ENCODE measurements at regions of chr14 and their contacts with region 1.

Region 1: GRCh38 chr14:52552063-52552988 is at the starts of genes GPR137C and TXNDC16:
- DNase-seq: peak; percentile 98 to 100 (median 99)
- ATAC-seq: peak; percentile 85
- H3K4me3 ChIP-seq: peak within 1 kb of the TSS; percentile 95
- H3K4me3 Mint-ChIP-seq: peak within 1 kb of the TSS; percentile 98
- H3K27ac ChIP-seq: peak within 1 kb of the TSS; percentile 80 to 88
- H3K27ac Mint-ChIP-seq: peak within 1 kb of the TSS; percentile 91
- H3K4me1 ChIP-seq: peaks cover 32% of the 10 kb centered on the region
- H3K4me1 Mint-ChIP-seq: peaks cover 39% of the 10 kb centered on the region
- H3K27me3 ChIP-seq: no peaks in the 10 kb centered on the region
- H3K27me3 Mint-ChIP-seq: peaks cover 15% of the 10 kb centered on the region
- CTCF ChIP-seq: no peak
- total RNA-seq, gene GPR137C: 0.08 to 0.19 TPM
- total RNA-seq, gene TXNDC16: 10.4 to 11.4 TPM

Region 2: DNA sequence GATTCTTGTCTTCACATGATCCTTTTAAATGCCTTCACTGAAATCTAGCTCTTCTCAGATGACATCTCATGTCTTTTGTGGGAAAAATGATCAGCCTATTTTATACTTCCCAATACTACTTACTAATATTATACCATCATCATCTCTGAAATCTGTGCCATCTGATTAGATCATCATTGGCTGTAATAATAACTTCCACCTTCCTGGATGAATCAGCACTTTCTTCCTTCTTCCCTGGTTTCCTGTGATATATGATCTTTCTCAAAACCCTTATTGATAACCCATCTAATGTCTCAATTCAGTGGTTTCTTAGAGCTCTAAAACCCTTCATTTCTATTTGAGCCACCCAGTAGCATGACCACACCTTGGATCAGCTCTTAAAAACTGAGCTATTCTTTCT is 31.2 kb after region 1 on chr14:
- CTCF ChIA-PET with region 1: no interaction called
- POLR2A ChIA-PET with region 1: no interaction called
- intact Hi-C with region 1: no loop called
- DNase-seq: no peak
- ATAC-seq: no peak
- H3K4me3 ChIP-seq: no peak overlapping the region
- H3K4me3 Mint-ChIP-seq: no peak overlapping the region
- H3K27ac ChIP-seq: no peak overlapping the region
- H3K27ac Mint-ChIP-seq: no peak overlapping the region
- H3K4me1 ChIP-seq: no peaks in the 10 kb centered on the region
- H3K4me1 Mint-ChIP-seq: no peaks in the 10 kb centered on the region
- H3K27me3 ChIP-seq: no peaks in the 10 kb centered on the region
- H3K27me3 Mint-ChIP-seq: no peaks in the 10 kb centered on the region
- CTCF ChIP-seq: no peak

Region 3: DNA sequence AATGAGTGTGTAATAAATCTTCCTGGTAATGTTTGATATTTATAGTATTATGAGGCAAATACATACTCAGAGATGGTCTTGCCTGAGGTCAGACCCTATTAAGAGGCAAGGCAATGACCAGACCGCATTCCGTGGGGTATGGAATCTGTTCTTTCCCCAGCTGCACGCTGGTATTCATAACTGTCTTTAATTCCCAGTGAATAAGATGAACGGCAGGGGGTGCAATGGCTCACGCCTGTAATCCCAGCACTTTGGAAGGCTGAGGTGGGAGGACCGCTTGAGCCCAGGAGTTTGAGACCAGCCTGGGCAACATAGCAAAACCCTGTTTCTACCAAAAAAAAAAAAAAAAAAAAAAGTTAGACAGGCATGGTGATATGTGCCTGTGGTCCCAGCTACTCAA is 98.4 kb after region 1 on chr14:
- CTCF ChIA-PET with region 1: interaction called, 3 read pairs
- POLR2A ChIA-PET with region 1: interaction called, 3 read pairs
- intact Hi-C with region 1: loop called in 1 of 2 experiments (anchors 10 kb)
- DNase-seq: no peak
- ATAC-seq: no peak
- H3K4me3 ChIP-seq: no peak overlapping the region
- H3K4me3 Mint-ChIP-seq: no peak overlapping the region
- H3K27ac ChIP-seq: no peak overlapping the region
- H3K27ac Mint-ChIP-seq: no peak overlapping the region
- H3K4me1 ChIP-seq: no peaks in the 10 kb centered on the region
- H3K4me1 Mint-ChIP-seq: no peaks in the 10 kb centered on the region
- H3K27me3 ChIP-seq: no peaks in the 10 kb centered on the region
- H3K27me3 Mint-ChIP-seq: no peaks in the 10 kb centered on the region
- CTCF ChIP-seq: no peak

Region 4: DNA sequence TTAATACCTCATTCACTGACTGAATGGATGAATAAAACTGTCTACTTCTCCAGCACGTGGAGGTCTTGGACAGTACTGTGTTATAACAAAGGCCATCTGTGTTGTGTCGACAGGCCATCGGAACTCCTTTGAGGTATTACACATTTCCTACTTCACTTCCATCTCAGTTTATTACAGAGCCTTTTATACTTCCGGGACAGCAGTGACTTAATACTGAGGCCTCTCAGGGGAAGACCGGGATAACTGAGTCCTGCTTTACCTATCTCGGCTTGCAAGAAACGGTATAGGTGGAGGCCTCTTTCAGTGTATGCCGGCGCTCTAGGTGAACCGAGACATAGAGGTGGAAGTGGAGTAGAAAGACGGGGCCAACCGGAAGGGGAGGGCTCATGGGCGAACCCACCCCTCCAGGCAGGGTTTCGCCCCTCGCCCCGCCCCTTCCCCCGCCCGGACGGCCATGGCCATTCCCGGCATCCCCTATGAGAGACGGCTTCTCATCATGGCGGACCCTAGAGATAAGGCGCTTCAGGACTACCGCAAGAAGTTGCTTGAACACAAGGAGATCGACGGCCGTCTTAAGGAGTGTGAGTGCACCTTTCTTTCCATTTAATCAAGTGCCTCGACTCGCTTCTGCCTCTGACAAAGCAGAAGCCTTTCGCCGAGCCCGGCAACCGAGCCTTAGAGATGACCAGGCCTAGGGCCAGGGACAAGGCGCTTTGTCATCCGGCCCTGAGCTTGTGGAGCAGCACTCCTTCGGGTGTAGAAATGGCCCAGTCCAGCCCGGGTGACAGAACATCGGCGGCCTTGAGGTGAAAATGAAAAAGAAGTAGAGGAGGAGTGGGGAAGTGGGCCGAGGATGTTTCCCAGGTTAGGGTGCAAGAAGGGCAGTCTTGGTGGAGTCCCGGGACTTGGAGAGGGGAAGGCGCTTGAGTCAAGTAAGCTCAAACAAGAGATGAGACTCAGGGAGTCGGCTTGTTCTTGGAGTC is 154.7 kb after region 1 on chr14 and contains the start of gene PSMC6:
- CTCF ChIA-PET with region 1: no interaction called
- POLR2A ChIA-PET with region 1: interaction called, 5 read pairs
- intact Hi-C with region 1: loop called (anchors 2 kb)
- DNase-seq: peak; percentile 90 to 97 (median 95)
- ATAC-seq: peak; percentile 98
- H3K4me3 ChIP-seq: peak within 1 kb of the TSS; percentile 72
- H3K4me3 Mint-ChIP-seq: peak within 1 kb of the TSS; percentile 96
- H3K27ac ChIP-seq: peak within 1 kb of the TSS; percentile 71 to 88
- H3K27ac Mint-ChIP-seq: peak within 1 kb of the TSS; percentile 94
- H3K4me1 ChIP-seq: peaks cover 13% of the 10 kb centered on the region
- H3K4me1 Mint-ChIP-seq: peaks cover 48% of the 10 kb centered on the region
- H3K27me3 ChIP-seq: no peaks in the 10 kb centered on the region
- H3K27me3 Mint-ChIP-seq: no peaks in the 10 kb centered on the region
- CTCF ChIP-seq: no peak
- total RNA-seq, gene PSMC6: 110 to 111 TPM

Region 5: DNA sequence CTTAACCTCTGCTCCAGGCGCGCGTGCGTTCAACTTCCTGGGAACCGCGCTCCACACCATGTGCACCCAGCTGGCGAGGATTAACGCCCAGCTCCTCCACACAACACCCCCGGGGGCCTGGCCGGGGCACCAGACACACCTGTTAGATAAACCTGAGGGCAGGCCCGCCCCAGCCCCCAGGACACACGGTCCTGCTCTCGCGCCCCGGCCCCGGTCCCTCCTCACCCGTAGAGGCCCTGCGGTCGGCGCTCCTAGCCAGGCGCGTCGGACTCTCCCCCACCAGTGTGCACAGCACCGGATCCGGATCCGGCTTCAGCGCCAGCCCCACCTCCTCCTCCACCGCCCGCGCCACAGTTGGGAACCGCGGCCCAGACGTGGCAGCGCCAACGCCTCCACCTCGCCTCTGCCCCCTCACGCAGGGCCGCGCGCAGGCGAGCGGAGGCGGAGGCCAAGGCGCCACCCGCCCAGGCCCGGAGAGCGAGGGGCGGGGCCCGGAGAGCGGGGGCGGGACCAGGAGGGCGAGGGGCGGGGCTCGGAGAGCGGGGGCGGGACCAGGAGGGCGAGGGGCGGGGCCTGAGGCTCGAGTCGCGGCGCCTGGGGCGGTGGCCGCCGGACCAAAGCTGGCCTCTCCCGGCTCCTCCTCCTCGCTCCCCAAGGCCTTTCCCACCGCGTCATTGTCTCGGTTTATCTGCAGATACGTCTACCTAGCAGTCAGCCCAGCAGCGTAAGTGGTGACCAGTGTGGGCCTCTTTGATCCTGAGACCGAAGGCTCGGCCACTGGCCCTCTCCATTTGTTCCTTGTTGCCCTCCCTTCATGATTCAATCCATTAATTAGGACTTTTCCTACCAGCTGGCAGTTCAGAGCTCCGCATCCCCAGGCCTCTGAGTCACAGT is 239.1 kb after region 1 on chr14 and contains the start of gene GNPNAT1:
- CTCF ChIA-PET with region 1: no interaction called
- POLR2A ChIA-PET with region 1: interaction called, 12 read pairs
- intact Hi-C with region 1: loop called (anchors 1 to 2 kb)
- DNase-seq: peak; percentile 79 to 97 (median 87)
- ATAC-seq: peak; percentile 97
- H3K4me3 ChIP-seq: peak within 1 kb of the TSS; percentile 95
- H3K4me3 Mint-ChIP-seq: peak within 1 kb of the TSS; percentile 94
- H3K27ac ChIP-seq: peak within 1 kb of the TSS; percentile 64 to 78
- H3K27ac Mint-ChIP-seq: peak within 1 kb of the TSS; percentile 92
- H3K4me1 ChIP-seq: peaks cover 21% of the 10 kb centered on the region
- H3K4me1 Mint-ChIP-seq: peaks cover 51% of the 10 kb centered on the region
- H3K27me3 ChIP-seq: no peaks in the 10 kb centered on the region
- H3K27me3 Mint-ChIP-seq: no peaks in the 10 kb centered on the region
- CTCF ChIP-seq: no peak
- total RNA-seq, gene GNPNAT1: 3.8 to 4.6 TPM